Activated CD4-positive, alpha-beta memory T cell treated with anti-CD3 and anti-CD28 coated beads for 36 hours (primary cell): ENCODE measurements at regions of chr1 and their contacts with region 1.

Region 1: GRCh38 chr1:24186993-24187805 is at the start of gene IFNLR1:
- DNase-seq: peak; percentile 91
- H3K4me3 Mint-ChIP-seq: peak within 1 kb of the TSS; percentile 80
- H3K27ac Mint-ChIP-seq: peak within 1 kb of the TSS; percentile 54
- H3K4me1 Mint-ChIP-seq: peaks cover 48% of the 10 kb centered on the region
- H3K27me3 Mint-ChIP-seq: peaks cover 2% of the 10 kb centered on the region
- total RNA-seq, gene IFNLR1: 6.2 to 10.0 TPM

Region 2: DNA sequence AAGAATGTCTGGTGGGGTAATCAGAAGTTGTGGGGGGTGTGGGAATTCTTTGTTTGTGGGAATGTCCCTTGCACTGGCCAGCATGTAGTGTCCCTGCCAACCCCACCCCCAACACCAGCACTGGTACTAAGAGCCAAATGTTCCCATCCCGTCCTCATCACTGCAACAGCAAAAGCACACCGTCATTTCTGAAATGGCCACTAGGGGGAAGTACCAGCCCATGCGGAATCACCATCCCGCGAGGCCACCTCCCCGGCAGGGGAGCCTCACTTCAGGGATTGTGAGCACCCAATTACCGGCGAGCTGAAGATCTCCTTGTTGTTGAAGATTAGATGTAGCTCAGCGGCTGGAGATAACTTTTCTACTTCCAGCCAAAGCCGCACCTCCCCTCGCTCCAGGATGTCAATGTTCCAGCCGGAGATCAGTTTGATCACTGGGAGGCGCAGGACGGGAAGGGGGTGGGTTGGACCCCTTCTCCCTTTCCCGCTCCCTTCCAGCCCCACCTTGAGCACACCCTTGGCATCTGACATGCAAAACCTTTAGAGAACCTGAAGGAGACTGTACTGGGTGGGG is 116.3 kb before region 1 on chr1:
- CTCF ChIA-PET with region 1: interaction called, 3 read pairs
- POLR2A ChIA-PET with region 1: no interaction called
- intact Hi-C with region 1: loop called (anchors 5 kb)
- DNase-seq: peak; percentile 83
- H3K4me3 Mint-ChIP-seq: no peak overlapping the region
- H3K27ac Mint-ChIP-seq: no peak overlapping the region
- H3K4me1 Mint-ChIP-seq: peaks cover 2% of the 10 kb centered on the region
- H3K27me3 Mint-ChIP-seq: peaks cover 10% of the 10 kb centered on the region

Region 3: DNA sequence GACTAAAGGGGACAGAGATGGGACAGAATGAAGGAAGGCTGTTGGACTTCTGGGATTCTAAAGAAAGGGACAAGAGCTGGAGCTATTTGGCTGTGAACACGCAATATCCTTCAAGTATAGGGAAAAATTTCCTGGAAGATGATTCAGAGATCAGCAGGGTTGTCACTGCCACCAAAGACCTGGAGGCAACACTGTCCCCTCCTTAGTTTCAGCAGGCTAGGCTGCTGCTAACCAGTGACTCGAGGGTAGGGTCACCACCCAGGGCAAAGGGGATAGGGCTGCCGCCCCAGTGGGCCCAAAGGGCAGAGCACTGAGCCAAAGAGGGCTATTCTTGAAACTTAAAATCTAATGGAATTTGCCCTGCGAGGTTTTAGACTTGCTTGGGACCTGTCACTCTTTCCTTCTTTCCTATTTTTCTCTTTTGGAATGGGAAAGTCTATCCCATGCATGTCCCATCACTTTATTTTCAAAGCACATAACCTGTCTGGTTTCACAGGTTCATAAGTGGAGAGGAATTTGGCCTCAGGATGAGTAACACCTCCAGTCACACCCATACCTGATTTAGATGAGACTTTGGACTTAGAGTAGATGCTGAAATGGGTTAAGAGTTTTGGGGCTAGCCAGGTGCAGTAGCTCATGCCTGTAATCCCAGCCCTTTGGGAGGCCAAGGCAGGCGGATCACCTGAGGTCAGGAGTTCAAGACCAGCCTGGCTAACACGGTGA is 12.0 kb before region 1 on chr1:
- CTCF ChIA-PET with region 1: no interaction called
- POLR2A ChIA-PET with region 1: no interaction called
- intact Hi-C with region 1: no loop called
- DNase-seq: no peak
- H3K4me3 Mint-ChIP-seq: no peak overlapping the region
- H3K27ac Mint-ChIP-seq: no peak overlapping the region
- H3K4me1 Mint-ChIP-seq: no peaks in the 10 kb centered on the region
- H3K27me3 Mint-ChIP-seq: no peaks in the 10 kb centered on the region

Region 4: GRCh38 chr1:24235921-24236781 is 49.0 kb after region 1 on chr1:
- CTCF ChIA-PET with region 1: no interaction called
- POLR2A ChIA-PET with region 1: no interaction called
- intact Hi-C with region 1: loop called (anchors 5 kb)
- DNase-seq: peak; percentile 83
- H3K4me3 Mint-ChIP-seq: no peak overlapping the region
- H3K27ac Mint-ChIP-seq: no peak overlapping the region
- H3K4me1 Mint-ChIP-seq: peaks cover 16% of the 10 kb centered on the region
- H3K27me3 Mint-ChIP-seq: peaks cover 21% of the 10 kb centered on the region

Region 5: DNA sequence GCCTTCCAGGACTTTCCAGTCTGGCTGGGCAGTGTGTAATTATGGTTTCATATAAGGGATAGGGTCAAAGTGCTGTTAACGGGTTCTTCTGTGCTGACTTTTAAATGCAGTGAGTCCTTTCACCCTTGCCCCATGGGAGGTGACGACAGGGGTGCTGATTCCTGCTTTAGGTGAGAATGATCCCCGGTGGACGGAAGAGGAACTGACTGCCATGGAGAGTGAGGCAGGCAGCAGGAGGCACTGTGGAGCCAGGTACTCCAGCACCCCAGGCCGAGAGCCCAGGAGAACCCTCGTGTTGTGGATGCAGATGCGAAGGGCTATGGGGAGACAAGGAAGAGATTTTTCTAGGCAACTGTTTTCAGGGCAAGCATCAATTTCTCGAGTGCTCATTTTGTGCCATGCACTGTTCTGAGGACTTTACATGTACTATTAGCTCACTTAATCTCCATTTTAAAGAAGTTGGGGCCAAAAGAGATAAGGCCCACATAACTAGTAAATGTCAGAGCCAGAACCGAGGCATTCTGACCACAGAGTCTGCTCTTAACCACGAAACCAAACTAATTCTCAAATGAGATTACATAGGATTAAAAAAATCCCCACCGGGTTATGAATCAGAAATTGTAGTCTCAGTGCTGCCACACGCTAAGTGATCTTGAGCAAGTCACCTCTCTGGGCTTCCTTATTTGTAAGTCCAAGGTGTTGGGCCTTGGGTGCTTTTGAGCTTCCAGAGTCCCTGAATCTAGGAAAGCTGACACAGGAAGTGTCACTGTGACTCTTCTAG is 198.2 kb after region 1 on chr1:
- CTCF ChIA-PET with region 1: interaction called, 87 read pairs
- POLR2A ChIA-PET with region 1: interaction called, 4 read pairs
- intact Hi-C with region 1: no loop called
- DNase-seq: peak; percentile 64
- H3K4me3 Mint-ChIP-seq: no peak overlapping the region
- H3K27ac Mint-ChIP-seq: peak overlapping the region; percentile 7
- H3K4me1 Mint-ChIP-seq: peaks cover 26% of the 10 kb centered on the region
- H3K27me3 Mint-ChIP-seq: no peaks in the 10 kb centered on the region

Region 6: DNA sequence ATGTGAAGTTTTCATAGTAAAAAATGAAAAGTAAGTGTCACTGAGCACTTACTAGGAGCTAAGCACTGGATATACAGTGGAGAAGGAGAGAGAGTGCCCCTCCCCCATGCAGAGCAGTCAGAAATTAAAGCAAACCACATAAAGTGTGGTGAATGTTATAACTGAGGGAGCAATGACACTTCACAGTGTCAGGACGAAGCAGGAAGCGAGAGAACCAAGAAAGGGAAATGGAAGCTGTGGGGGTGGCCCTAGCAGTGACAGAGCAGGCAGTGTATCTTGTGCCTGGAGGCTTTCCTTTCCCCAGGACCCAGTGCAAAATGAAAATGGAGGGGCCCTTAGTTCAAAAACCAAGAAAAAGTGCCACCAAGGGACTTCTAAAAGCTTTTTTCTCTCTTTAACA is 293.9 kb after region 1 on chr1:
- CTCF ChIA-PET with region 1: no interaction called
- POLR2A ChIA-PET with region 1: no interaction called
- intact Hi-C with region 1: loop called (anchors 5 kb)
- DNase-seq: peak; percentile 83
- H3K4me3 Mint-ChIP-seq: peak overlapping the region; percentile 58
- H3K27ac Mint-ChIP-seq: peak overlapping the region; percentile 97
- H3K4me1 Mint-ChIP-seq: peaks cover 60% of the 10 kb centered on the region
- H3K27me3 Mint-ChIP-seq: no peaks in the 10 kb centered on the region